CD8-positive, alpha-beta T cell (primary cell): ENCODE measurements at regions of chr12 and their contacts with region 1.

Region 1: GRCh38 chr12:56127888-56128669 is at the start of gene ESYT1:
- DNase-seq: peak; percentile 94 to 100 (median 96)
- ATAC-seq: peak; percentile 87
- H3K4me3 ChIP-seq: peak within 1 kb of the TSS; percentile 71 to 97
- H3K4me3 Mint-ChIP-seq: peak within 1 kb of the TSS; percentile 97
- H3K27ac ChIP-seq: peak within 1 kb of the TSS; percentile 79 to 86
- H3K27ac Mint-ChIP-seq: peak within 1 kb of the TSS; percentile 94
- H3K4me1 ChIP-seq: peaks cover 60% of the 10 kb centered on the region
- H3K4me1 Mint-ChIP-seq: peaks cover 64% of the 10 kb centered on the region
- H3K27me3 ChIP-seq: no peaks in the 10 kb centered on the region
- H3K27me3 Mint-ChIP-seq: no peaks in the 10 kb centered on the region
- CTCF ChIP-seq: no peak
- total RNA-seq, gene ESYT1: 82.4 to 83.0 TPM

Region 2: DNA sequence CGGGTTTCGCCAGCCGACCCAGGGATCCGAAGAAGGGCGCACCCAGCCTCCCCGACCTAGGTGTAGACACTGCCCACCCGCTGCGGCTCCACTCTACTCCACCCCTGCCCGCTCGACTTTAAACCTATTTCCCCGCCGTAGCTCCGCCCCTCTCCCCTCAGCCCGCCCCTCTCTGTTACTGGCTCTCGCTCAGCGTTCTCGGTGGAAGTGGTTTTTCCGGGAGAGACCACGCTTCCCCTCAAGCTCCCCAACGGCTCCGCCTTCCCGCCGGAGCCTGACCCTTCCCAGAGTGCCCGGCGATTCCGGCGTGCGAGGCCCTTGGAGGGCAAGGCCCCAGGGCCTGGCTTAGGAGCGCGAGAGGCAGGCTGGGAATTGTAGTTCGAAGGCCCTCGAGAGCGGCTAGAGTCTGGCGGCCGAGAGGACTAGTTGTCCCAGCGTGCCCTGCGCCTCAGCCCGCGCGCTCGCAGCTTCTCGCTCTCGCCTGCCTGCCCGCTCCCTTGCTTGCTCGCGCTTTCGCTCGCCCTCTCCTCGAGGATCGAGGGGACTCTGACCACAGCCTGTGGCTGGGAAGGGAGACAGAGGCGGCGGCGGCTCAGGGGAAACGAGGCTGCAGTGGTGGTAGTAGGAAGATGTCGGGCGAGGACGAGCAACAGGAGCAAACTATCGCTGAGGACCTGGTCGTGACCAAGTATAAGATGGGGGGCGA is 23.8 kb before region 1 on chr12 and contains the start of gene PA2G4:
- CTCF ChIA-PET with region 1: interaction called, 4 read pairs
- POLR2A ChIA-PET with region 1: interaction called, 17 read pairs
- intact Hi-C with region 1: no loop called
- DNase-seq: peak; percentile 91 to 99 (median 96)
- ATAC-seq: peak; percentile 88
- H3K4me3 ChIP-seq: peak within 1 kb of the TSS; percentile 90
- H3K4me3 Mint-ChIP-seq: peak within 1 kb of the TSS; percentile 99
- H3K27ac ChIP-seq: peak within 1 kb of the TSS; percentile 53 to 70
- H3K27ac Mint-ChIP-seq: peak within 1 kb of the TSS; percentile 98
- H3K4me1 ChIP-seq: peaks cover 37% of the 10 kb centered on the region
- H3K4me1 Mint-ChIP-seq: peaks cover 66% of the 10 kb centered on the region
- H3K27me3 ChIP-seq: no peaks in the 10 kb centered on the region
- H3K27me3 Mint-ChIP-seq: no peaks in the 10 kb centered on the region
- CTCF ChIP-seq: no peak
- total RNA-seq, gene PA2G4: 61.6 to 62.4 TPM

Region 3: GRCh38 chr12:56158029-56158925 is 30.2 kb after region 1 on chr12 and contains the start of gene MYL6:
- CTCF ChIA-PET with region 1: interaction called, 14 read pairs
- POLR2A ChIA-PET with region 1: interaction called, 17 read pairs
- intact Hi-C with region 1: loop called (anchors 1 kb)
- DNase-seq: peak; percentile 72 to 98 (median 90)
- ATAC-seq: peak; percentile 79
- H3K4me3 ChIP-seq: peak within 1 kb of the TSS; percentile 70 to 83
- H3K4me3 Mint-ChIP-seq: peak within 1 kb of the TSS; percentile 98
- H3K27ac ChIP-seq: peak within 1 kb of the TSS; percentile 86 to 94
- H3K27ac Mint-ChIP-seq: peak within 1 kb of the TSS; percentile 99
- H3K4me1 ChIP-seq: peaks cover 32% of the 10 kb centered on the region
- H3K4me1 Mint-ChIP-seq: peaks cover 42% of the 10 kb centered on the region
- H3K27me3 ChIP-seq: no peaks in the 10 kb centered on the region
- H3K27me3 Mint-ChIP-seq: no peaks in the 10 kb centered on the region
- CTCF ChIP-seq: no peak
- total RNA-seq, gene MYL6: 580 to 582 TPM

Region 4: DNA sequence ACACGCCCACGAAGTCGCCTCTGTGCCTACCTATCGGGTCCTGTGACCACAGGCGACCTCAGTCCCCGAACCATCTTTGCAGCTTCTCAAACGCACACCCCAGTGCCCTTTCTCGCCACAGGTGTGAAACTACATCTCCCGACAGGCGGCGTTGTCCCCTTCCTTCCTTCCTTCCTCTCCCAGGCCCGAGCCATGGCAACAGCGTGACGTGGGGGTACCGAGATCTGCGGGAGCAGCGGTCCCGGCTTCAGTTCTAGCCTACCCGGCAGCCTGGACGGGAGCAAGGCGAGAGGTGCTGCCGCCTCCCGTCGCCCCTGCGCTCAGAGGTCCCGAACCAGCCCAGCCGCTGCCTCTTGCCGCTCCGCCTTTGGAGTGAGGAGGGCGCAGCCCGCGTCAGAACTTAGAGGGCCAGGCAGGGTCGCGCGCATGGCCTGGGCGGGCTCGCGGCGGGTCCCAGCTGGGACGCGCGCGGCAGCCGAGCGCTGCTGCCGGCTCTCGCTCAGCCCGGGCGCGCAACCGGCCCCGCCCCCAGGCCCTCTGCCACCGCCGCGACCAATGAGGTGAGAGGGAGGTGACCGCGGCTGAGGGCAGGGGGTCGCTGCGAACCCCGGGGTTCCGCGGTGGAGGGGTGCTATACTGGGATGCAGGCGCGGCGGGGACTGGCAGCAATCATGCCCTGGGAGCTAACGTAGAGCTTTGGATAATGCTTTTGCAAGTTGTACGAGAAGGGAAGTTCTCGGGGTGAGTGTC is 138.8 kb after region 1 on chr12 and contains the start of gene COQ10A:
- CTCF ChIA-PET with region 1: interaction called, 3 read pairs
- POLR2A ChIA-PET with region 1: no interaction called
- intact Hi-C with region 1: loop called in 1 of 2 experiments (anchors 2 kb)
- DNase-seq: peak; percentile 77 to 95 (median 92)
- ATAC-seq: peak; percentile 87
- H3K4me3 ChIP-seq: peak within 1 kb of the TSS; percentile 87 to 89
- H3K4me3 Mint-ChIP-seq: peak within 1 kb of the TSS; percentile 92
- H3K27ac ChIP-seq: peak within 1 kb of the TSS; percentile 95 to 98
- H3K27ac Mint-ChIP-seq: peak within 1 kb of the TSS; percentile 92
- H3K4me1 ChIP-seq: peaks cover 12% of the 10 kb centered on the region
- H3K4me1 Mint-ChIP-seq: peaks cover 20% of the 10 kb centered on the region
- H3K27me3 ChIP-seq: no peaks in the 10 kb centered on the region
- H3K27me3 Mint-ChIP-seq: no peaks in the 10 kb centered on the region
- CTCF ChIP-seq: peak; percentile 66
- total RNA-seq, gene COQ10A: 29.5 to 38.8 TPM

Region 5: DNA sequence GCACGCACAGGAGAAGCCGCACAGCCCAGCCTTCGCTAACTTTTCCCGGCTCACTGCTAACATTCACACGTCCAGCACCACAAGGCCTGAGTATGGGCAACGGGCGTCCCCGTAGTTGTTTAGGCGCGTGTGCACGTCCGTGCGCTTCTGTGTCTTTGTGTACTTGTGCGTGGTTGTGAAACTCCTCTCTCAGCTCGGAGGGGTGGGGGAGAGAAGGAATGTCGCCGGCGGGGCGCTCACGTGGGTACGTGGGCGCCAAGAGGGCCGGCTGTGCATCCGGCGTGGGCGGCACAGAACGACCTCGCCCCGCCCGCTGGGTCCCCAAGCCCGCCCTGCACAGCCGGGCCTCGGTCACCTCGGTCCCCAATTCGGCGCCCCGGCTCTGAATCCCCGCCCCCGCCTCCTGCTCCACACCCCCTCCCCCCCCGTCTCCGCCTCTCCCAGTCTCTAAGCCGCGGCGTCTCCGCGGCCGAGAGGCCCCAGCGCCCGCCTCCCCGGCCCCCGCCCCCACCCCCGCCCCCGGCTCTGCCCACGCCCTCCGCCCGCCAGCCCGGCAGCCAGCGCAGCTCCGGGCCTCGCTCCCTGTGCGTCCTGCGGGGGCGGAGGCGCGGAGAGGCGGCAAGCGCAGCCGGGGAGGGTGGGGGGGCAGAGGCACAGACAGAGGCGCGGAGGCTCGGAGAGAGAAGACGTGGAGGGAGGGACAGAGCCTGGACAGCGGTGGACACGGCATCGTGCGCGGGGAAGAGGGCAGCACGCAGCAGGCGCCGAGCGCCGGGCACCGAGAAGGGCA is 960.6 kb after region 1 on chr12 and contains the start of gene NAB2:
- CTCF ChIA-PET with region 1: no interaction called
- POLR2A ChIA-PET with region 1: no interaction called
- intact Hi-C with region 1: loop called in 1 of 2 experiments (anchors 10 kb)
- DNase-seq: peak; percentile 87 to 97 (median 95)
- ATAC-seq: peak; percentile 60
- H3K4me3 ChIP-seq: peak within 1 kb of the TSS; percentile 87 to 95
- H3K4me3 Mint-ChIP-seq: peak within 1 kb of the TSS; percentile 92
- H3K27ac ChIP-seq: peak within 1 kb of the TSS; percentile 97 to 100
- H3K27ac Mint-ChIP-seq: peak within 1 kb of the TSS; percentile 95
- H3K4me1 ChIP-seq: peaks cover 47% of the 10 kb centered on the region
- H3K4me1 Mint-ChIP-seq: peaks cover 64% of the 10 kb centered on the region
- H3K27me3 ChIP-seq: no peaks in the 10 kb centered on the region
- H3K27me3 Mint-ChIP-seq: no peaks in the 10 kb centered on the region
- CTCF ChIP-seq: no peak
- total RNA-seq, gene NAB2: 5.9 to 6.7 TPM